Ovary (tissue), 10 donors: ENCODE measurements at regions of chr1 and their contacts with region 1.

Region 1: DNA sequence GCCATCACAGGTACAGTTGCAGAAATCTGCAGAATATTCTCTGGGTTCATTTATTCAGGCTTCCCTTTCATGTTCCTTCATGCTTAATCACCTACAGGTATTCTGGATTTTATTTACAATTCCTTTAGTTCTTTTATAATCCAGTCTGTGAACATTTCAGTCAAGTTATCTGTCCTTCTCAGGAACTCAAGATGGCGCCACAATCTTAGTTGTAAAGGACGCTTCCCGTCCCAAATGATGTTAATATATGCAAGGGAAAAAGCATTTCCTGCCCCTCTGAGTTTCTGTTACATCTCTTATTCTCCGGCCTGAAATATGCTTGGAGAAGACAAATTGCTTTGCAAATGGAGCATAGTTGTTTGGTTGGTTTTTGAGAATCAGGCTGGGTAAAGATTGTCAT is 19.3 kb downstream of the F3 start:
- DNase-seq: peak in 1 of 5 donors; percentile 61
- H3K4me3 ChIP-seq: no peak overlapping the region
- H3K27ac ChIP-seq: no peak overlapping the region
- H3K4me1 ChIP-seq: no peaks in the 10 kb centered on the region
- H3K27me3 ChIP-seq: no peaks in the 10 kb centered on the region
- CTCF ChIP-seq: peak; percentile 23 to 70 (median 53)
- EP300 ChIP-seq: no peak
- POLR2A ChIP-seq: no peak

Region 2: GRCh38 chr1:94801919-94802546 is 279.7 kb after region 1 on chr1:
- intact Hi-C with region 1: loop called in 3 of 4 experiments (anchors 2 to 5 kb)
- DNase-seq: peak; percentile 42 to 61 (median 53)
- H3K4me3 ChIP-seq: peak overlapping the region; percentile 11
- H3K27ac ChIP-seq: peak overlapping the region; percentile 54 to 73
- H3K4me1 ChIP-seq: peaks cover 7% of the 10 kb centered on the region
- H3K27me3 ChIP-seq: no peaks in the 10 kb centered on the region
- CTCF ChIP-seq: peak; percentile 37 to 66 (median 41)
- EP300 ChIP-seq: no peak
- POLR2A ChIP-seq: no peak